CD4-positive, alpha-beta memory T cell (primary cell): ENCODE measurements at regions of chr1 and their contacts with region 1.

Region 1: GRCh38 chr1:44819608-44820327 is 11.4 kb downstream of the BTBD19 start:
- DNase-seq: peak; percentile 83 to 90 (median 88)
- H3K4me3 ChIP-seq: peak overlapping the region; percentile 74 to 86
- H3K4me3 Mint-ChIP-seq: peak overlapping the region; percentile 91 to 96 (median 95)
- H3K27ac ChIP-seq: peak overlapping the region; percentile 88
- H3K27ac Mint-ChIP-seq: peak overlapping the region; percentile 100
- H3K4me1 ChIP-seq: peaks cover 33% of the 10 kb centered on the region
- H3K4me1 Mint-ChIP-seq: peaks cover 22 to 57% (median 35%) of the 10 kb centered on the region in 4 donors
- H3K27me3 ChIP-seq: no peaks in the 10 kb centered on the region
- H3K27me3 Mint-ChIP-seq: no peaks in the 10 kb centered on the region

Region 2: GRCh38 chr1:44786138-44786840 is 33.5 kb before region 1 on chr1:
- CTCF ChIA-PET with region 1: interaction called, 9 read pairs
- POLR2A ChIA-PET with region 1: interaction called, 54 read pairs
- intact Hi-C with region 1: no loop called
- DNase-seq: peak; percentile 72 to 84 (median 80)
- H3K4me3 ChIP-seq: peak overlapping the region; percentile 52 to 68
- H3K4me3 Mint-ChIP-seq: peak overlapping the region; percentile 73 to 83 (median 80)
- H3K27ac ChIP-seq: peak overlapping the region; percentile 53
- H3K27ac Mint-ChIP-seq: peak overlapping the region; percentile 41 to 95 (median 88)
- H3K4me1 ChIP-seq: peaks cover 39% of the 10 kb centered on the region
- H3K4me1 Mint-ChIP-seq: peaks cover 22 to 37% (median 28%) of the 10 kb centered on the region in 4 donors
- H3K27me3 ChIP-seq: no peaks in the 10 kb centered on the region
- H3K27me3 Mint-ChIP-seq: no peaks in the 10 kb centered on the region

Region 3: DNA sequence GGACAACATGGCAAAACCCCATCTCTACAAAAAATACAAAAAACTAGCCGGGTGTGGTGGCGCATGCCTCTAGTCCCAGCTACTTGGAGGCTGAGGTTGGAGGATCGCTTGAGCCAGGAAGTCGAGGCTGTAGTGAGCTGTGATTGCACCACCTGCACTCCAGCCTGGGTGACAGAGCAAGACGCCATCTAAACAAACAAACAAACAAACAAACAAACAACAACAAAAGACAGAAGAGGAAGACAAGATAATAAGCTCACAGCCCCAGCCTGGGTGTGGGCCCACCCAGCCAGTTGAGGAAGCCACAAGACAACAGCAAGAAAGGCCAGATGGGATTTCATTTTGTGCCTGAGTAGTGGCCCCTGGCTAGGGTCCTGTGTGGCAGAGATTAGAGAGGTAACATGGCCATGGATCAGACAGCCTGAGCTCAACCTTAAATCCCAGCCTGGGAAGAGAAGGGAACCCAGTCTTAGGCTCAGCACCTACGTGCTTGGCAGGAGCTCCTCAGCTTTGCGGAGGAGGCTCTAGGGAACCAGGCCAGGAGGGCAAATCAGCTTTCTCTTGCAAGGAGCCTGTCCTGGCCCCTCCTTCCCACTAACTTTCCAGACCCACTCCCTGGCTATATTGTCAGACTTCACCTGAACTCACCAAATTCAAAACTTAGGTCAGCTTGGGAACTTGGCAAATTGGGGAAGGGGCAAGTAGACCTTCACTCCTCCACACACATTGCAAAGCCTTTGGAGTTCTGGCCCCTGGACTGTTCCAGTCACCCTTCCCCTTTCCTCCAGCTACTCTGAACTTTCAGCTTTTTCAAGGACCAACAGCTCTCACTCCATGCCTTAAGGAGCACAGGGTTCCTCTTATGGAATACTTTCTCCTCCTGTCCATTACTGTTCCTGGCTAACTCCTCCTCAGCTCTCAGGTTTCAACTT is 26.7 kb before region 1 on chr1:
- CTCF ChIA-PET with region 1: interaction called, 15 read pairs
- POLR2A ChIA-PET with region 1: interaction called, 1,564 read pairs
- intact Hi-C with region 1: no loop called
- DNase-seq: no peak
- H3K4me3 ChIP-seq: no peak overlapping the region
- H3K4me3 Mint-ChIP-seq: no peak overlapping the region
- H3K27ac ChIP-seq: no peak overlapping the region
- H3K27ac Mint-ChIP-seq: peak overlapping the region in 3 of 7 donors; percentile 44 to 91 (median 79)
- H3K4me1 ChIP-seq: no peaks in the 10 kb centered on the region
- H3K4me1 Mint-ChIP-seq: peaks cover 0 to 5% (median 2%) of the 10 kb centered on the region in 4 donors
- H3K27me3 ChIP-seq: no peaks in the 10 kb centered on the region
- H3K27me3 Mint-ChIP-seq: no peaks in the 10 kb centered on the region

Region 4: DNA sequence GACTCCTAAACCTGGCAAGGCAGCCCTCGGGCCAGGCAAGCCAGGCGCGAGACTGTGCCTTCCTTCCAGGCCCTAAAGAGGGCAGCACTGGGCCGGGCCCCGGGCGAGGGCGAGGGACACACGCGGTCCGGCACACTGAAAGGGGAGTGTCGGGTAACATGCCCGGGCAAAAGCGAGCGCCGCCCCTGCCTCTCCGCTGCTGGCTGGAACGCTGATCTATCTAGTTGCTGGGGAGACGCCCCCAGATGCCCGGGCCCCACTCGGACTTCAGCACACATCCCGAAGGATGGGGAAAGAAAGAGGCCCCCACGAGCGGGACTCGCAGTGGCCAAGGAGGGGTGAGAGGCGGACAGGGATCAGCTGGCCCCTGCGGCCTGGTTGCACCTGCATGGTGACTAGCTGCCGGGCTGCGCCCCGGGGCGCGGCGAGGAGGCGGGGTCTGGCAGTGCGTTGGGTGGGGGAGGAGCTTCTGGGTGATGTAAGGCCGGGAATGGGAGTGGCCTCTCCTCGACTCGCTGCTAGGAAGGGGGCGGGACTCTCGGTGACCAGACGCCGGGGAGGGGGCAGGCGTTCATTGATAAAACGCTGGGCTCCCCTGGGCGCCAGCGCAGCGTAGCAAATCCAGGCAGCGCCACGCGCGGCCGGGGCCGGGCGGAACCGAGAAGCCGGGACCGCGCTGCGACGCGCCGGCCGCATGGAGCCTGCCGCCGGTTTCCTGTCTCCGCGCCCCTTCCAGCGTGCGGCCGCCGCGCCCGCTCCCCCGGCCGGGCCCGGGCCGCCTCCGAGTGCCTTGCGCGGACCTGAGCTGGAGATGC is 19.8 kb before region 1 on chr1 and contains the start of gene PLK3:
- CTCF ChIA-PET with region 1: interaction called, 174 read pairs
- POLR2A ChIA-PET with region 1: interaction called, 1,564 read pairs
- intact Hi-C with region 1: loop called (anchors 1 kb)
- DNase-seq: peak; percentile 99 to 100 (median 99)
- H3K4me3 ChIP-seq: peak within 1 kb of the TSS; percentile 77 to 83
- H3K4me3 Mint-ChIP-seq: peak within 1 kb of the TSS; percentile 89 to 99 (median 96)
- H3K27ac ChIP-seq: peak within 1 kb of the TSS; percentile 96
- H3K27ac Mint-ChIP-seq: peak within 1 kb of the TSS; percentile 82 to 100 (median 99)
- H3K4me1 ChIP-seq: peaks cover 37% of the 10 kb centered on the region
- H3K4me1 Mint-ChIP-seq: peaks cover 23 to 48% (median 31%) of the 10 kb centered on the region in 4 donors
- H3K27me3 ChIP-seq: no peaks in the 10 kb centered on the region
- H3K27me3 Mint-ChIP-seq: no peaks in the 10 kb centered on the region
- total RNA-seq, gene PLK3: 151 to 153 TPM

Region 5: DNA sequence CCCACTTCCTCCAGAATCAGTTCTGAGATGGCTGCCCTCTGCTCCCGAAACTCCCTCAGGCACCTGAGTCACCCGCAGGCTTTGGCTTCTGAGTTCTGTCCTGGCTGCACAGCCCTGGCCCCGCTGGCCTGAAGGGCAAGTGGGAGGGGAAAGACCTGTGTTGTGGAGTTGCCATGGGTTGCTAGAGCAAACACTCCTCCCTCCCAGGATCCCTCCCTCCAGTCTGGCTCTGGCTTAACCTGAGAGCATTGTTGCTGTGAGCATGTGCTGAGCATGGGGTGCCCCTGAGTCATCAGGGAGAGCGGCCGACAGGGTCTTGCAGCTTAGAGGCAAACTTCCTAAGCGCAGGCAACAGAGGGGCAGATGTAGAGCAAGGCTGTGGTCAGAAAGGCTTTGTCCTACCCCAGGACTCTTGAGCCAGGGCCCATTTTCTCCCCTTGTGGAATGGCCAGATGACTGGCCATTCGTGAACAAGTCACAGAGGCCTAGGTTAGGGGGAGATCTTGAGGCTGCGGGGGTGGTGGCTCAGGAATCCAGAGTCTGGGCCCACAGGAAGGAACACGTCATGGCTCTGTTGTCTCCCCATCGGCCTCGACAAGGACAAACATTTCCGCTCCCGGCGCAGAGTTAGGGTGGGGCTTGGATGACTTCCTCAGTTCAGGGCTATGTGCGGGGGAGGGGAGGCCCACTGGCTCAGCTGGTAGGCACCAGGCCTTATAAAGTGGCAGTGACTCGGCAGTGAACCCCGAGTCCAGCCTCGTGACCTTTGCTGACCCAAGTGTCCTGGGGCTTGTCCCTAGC is 12.3 kb before region 1 on chr1 and contains the start of gene DYNLT4:
- CTCF ChIA-PET with region 1: interaction called, 174 read pairs
- POLR2A ChIA-PET with region 1: interaction called, 1,564 read pairs
- intact Hi-C with region 1: loop called (anchors 1 kb)
- DNase-seq: peak; percentile 91 to 98 (median 91)
- H3K4me3 ChIP-seq: peak within 1 kb of the TSS; percentile 41 to 57
- H3K4me3 Mint-ChIP-seq: peak within 1 kb of the TSS; percentile 74 to 87 (median 80)
- H3K27ac ChIP-seq: peak within 1 kb of the TSS; percentile 98
- H3K27ac Mint-ChIP-seq: peak within 1 kb of the TSS; percentile 98 to 100 (median 99)
- H3K4me1 ChIP-seq: peaks cover 91% of the 10 kb centered on the region
- H3K4me1 Mint-ChIP-seq: peaks cover 57 to 94% (median 73%) of the 10 kb centered on the region in 4 donors
- H3K27me3 ChIP-seq: no peaks in the 10 kb centered on the region
- H3K27me3 Mint-ChIP-seq: no peaks in the 10 kb centered on the region
- total RNA-seq, gene DYNLT4: 0.47 TPM in 1 of 2 experiments, not detected in the other

Region 6: GRCh38 chr1:44835738-44836675 is 16.2 kb after region 1 on chr1:
- CTCF ChIA-PET with region 1: interaction called, 11 read pairs
- POLR2A ChIA-PET with region 1: interaction called, 24 read pairs
- intact Hi-C with region 1: loop called (anchors 2 kb)
- DNase-seq: peak; percentile 71 to 83 (median 75)
- H3K4me3 ChIP-seq: no peak overlapping the region
- H3K4me3 Mint-ChIP-seq: peak overlapping the region in 4 of 8 donors; percentile 19 to 69 (median 42)
- H3K27ac ChIP-seq: no peak overlapping the region
- H3K27ac Mint-ChIP-seq: peak overlapping the region in 6 of 7 donors; percentile 7 to 74 (median 58)
- H3K4me1 ChIP-seq: peaks cover 4% of the 10 kb centered on the region
- H3K4me1 Mint-ChIP-seq: peaks cover 5 to 9% (median 8%) of the 10 kb centered on the region in 4 donors
- H3K27me3 ChIP-seq: no peaks in the 10 kb centered on the region
- H3K27me3 Mint-ChIP-seq: peaks cover 5 to 10% of the 10 kb centered on the region in 2 donors

Region 7: DNA sequence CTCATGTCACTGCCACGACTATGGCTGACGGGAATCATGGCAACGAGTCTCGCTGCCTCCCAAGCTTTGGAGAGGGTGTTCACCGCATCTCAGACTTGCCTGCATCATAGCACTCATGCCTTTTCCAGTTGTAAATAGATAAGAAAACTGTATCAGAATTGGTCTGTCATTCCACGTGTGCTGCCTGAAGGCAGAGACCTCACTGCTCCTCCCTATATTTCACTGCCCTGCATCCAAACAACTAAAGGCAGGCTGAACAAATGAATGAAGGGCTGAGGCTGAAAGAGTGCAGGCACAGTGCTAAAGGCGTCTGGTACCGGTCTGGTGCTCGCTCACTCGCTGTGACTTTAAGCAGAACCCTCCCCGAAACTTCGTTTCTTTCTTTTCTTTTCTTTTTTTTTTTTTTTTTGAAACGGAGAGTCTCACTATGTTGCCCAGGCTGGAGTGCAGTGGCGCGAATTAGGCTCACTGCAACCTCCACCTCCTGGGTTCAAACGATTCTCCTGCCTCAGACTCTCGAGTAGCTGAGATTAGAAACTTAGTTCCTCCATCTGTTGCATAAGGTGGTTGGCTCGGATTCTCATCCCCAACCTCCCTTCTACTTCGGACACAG is 166.1 kb after region 1 on chr1:
- CTCF ChIA-PET with region 1: no interaction called
- POLR2A ChIA-PET with region 1: interaction called, 12 read pairs
- intact Hi-C with region 1: no loop called
- DNase-seq: no peak
- H3K4me3 ChIP-seq: peak overlapping the region; percentile 67 to 70
- H3K4me3 Mint-ChIP-seq: peak overlapping the region; percentile 98 to 100 (median 99)
- H3K27ac ChIP-seq: peak overlapping the region; percentile 59
- H3K27ac Mint-ChIP-seq: peak overlapping the region; percentile 34 to 99 (median 96)
- H3K4me1 ChIP-seq: peaks cover 11% of the 10 kb centered on the region
- H3K4me1 Mint-ChIP-seq: peaks cover 15 to 26% (median 21%) of the 10 kb centered on the region in 4 donors
- H3K27me3 ChIP-seq: no peaks in the 10 kb centered on the region
- H3K27me3 Mint-ChIP-seq: no peaks in the 10 kb centered on the region